Caco-2 (cell line): ENCODE measurements at regions of chr7 and their contacts with region 1.

Region 1: DNA sequence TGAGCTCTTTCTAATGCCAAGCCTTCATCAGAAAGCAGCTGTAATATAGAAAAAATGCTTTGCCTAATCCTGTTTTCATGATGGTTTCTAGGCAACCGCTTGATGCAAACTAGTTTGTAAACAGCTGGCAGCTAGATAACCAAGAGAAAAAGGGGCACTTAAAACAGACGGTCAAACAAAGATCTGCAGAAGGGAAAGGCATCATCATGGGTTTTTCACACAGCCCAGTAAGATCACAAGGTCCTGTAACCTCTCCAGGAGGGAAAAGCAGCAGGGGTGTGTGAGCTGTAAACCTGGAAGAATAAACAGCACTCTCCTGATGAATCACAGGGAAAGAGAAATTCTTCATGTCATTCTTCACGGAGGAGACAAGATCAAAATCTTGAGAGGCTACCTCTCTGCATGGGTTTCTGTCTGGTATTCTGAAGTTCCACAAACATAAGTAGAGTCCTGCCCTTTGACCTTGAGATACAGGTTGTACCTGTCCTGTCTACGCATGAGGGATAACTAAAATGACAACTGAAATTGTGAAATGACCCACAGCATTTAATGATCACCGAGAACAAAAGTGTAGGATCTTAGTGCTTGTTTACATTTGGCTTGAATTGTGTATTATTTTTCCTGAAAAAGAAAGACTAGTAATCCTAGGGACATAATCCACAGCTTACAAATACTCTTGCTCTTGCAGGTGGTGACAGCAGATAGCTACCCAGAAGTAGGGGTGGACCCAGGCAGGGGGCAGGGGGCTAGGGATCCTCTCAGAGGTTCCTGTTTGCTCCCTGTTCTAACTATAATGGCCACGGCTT is 48.0 kb downstream of the CREB3L2 start:
- DNase-seq: peak; percentile 79 to 91
- H3K4me3 ChIP-seq: no peak overlapping the region
- H3K4me3 Mint-ChIP-seq: peak overlapping the region; percentile 56
- H3K27ac Mint-ChIP-seq: peak overlapping the region; percentile 85
- H3K4me1 ChIP-seq: peaks cover 97% of the 10 kb centered on the region
- H3K4me1 Mint-ChIP-seq: peaks cover 72% of the 10 kb centered on the region
- H3K27me3 ChIP-seq: no peaks in the 10 kb centered on the region
- H3K27me3 Mint-ChIP-seq: no peaks in the 10 kb centered on the region
- CTCF ChIP-seq: no peak

Region 2: GRCh38 chr7:137717811-137718271 is 236.0 kb before region 1 on chr7:
- CTCF ChIA-PET with region 1: no interaction called
- POLR2A ChIA-PET with region 1: no interaction called
- intact Hi-C with region 1: no loop called
- DNase-seq: no peak
- H3K4me3 ChIP-seq: no peak overlapping the region
- H3K4me3 Mint-ChIP-seq: no peak overlapping the region
- H3K27ac Mint-ChIP-seq: no peak overlapping the region
- H3K4me1 ChIP-seq: no peaks in the 10 kb centered on the region
- H3K4me1 Mint-ChIP-seq: no peaks in the 10 kb centered on the region
- H3K27me3 ChIP-seq: no peaks in the 10 kb centered on the region
- H3K27me3 Mint-ChIP-seq: peaks cover 8% of the 10 kb centered on the region
- CTCF ChIP-seq: no peak

Region 3: DNA sequence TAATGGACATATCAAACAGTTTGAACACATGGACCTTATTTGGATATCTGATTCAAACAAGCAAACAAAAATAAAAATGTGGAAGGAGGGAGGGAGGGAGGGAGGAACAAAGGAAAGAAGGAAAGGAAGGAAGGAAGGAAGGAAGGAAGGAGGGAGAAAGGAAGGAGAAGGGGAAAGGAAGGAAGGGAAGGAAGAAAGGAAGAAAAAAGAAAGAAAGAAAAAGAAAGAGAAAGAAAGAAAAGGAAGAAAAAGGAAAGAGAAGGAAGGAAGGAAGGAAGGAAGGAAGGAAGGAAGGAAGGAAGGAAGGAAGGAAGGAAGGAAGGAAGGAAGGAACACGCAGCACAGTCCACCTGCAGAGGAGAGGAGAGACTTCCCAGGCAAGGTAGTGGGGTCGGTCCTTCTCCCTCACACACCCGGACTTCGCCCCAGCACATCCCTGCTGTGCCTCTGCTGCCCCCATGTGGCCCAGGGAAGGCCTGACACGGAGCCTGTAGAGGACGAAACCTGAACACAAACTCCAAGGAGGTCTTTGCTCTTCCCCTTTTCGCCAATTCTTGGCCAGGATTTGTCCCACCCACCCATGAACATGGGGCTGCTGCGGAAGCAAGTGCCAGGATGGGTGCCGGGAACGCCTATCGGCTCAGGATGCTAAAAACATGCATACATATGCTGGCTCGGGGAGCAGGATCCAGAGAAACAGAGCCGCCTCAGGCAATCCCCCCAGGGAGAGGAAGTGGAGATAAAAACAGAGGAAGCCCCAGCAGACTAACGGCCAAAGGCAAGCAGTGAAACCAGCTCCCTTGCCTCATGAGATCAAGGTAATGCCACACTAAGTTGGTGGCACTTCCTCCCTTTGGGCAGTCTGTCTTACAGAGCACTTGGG is 54.8 kb before region 1 on chr7:
- CTCF ChIA-PET with region 1: no interaction called
- POLR2A ChIA-PET with region 1: no interaction called
- intact Hi-C with region 1: loop called (anchors 1 kb)
- DNase-seq: peak; percentile 84 to 89
- H3K4me3 ChIP-seq: no peak overlapping the region
- H3K4me3 Mint-ChIP-seq: no peak overlapping the region
- H3K27ac Mint-ChIP-seq: peak overlapping the region; percentile 54
- H3K4me1 ChIP-seq: peaks cover 6% of the 10 kb centered on the region
- H3K4me1 Mint-ChIP-seq: peaks cover 20% of the 10 kb centered on the region
- H3K27me3 ChIP-seq: no peaks in the 10 kb centered on the region
- H3K27me3 Mint-ChIP-seq: no peaks in the 10 kb centered on the region
- CTCF ChIP-seq: peak; percentile 92 to 96

Region 4: GRCh38 chr7:137933270-137934017 is 20.4 kb before region 1 on chr7:
- CTCF ChIA-PET with region 1: no interaction called
- POLR2A ChIA-PET with region 1: no interaction called
- intact Hi-C with region 1: loop called (anchors 2 kb)
- DNase-seq: no peak
- H3K4me3 ChIP-seq: no peak overlapping the region
- H3K4me3 Mint-ChIP-seq: no peak overlapping the region
- H3K27ac Mint-ChIP-seq: no peak overlapping the region
- H3K4me1 ChIP-seq: peaks cover 56% of the 10 kb centered on the region
- H3K4me1 Mint-ChIP-seq: peaks cover 48% of the 10 kb centered on the region
- H3K27me3 ChIP-seq: no peaks in the 10 kb centered on the region
- H3K27me3 Mint-ChIP-seq: no peaks in the 10 kb centered on the region
- CTCF ChIP-seq: no peak

Region 5: DNA sequence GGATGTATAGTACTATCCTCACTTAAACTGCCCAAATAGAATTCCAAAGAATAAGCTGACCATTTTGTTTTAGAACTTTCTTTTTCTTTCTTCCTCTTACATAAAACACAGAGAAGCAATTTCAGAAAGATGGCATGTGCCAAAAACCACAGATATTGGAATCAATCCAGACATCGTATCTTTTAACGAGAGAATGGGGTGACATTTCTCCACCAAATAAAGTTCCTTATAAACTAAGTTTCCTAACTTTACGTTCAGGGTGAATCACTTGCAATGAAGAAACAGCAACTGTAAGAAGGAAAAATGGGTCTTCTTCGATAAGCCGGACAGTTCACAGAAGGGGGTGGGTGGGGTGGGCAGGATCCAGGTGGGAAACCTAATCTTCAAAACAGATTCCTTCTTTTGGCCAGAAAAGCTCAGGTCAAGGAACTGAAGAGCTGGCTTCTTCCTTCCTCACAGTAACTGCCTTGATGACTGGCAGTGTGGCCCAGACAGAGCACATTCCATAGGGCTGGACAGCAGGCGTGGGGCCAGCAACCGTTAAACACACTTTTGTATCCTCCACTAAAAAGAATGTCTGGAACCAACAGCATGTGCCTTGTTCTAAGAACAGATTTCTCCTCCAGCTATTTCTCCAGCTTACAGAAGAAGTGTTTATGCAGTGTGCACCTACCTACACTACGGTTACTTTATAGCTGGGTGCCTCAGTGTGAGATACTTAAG is 16.5 kb after region 1 on chr7:
- CTCF ChIA-PET with region 1: interaction called, 5 read pairs
- POLR2A ChIA-PET with region 1: interaction called, 9 read pairs
- intact Hi-C with region 1: loop called (anchors 1 kb)
- DNase-seq: no peak
- H3K4me3 ChIP-seq: no peak overlapping the region
- H3K4me3 Mint-ChIP-seq: no peak overlapping the region
- H3K27ac Mint-ChIP-seq: no peak overlapping the region
- H3K4me1 ChIP-seq: peaks cover 58% of the 10 kb centered on the region
- H3K4me1 Mint-ChIP-seq: peaks cover 42% of the 10 kb centered on the region
- H3K27me3 ChIP-seq: no peaks in the 10 kb centered on the region
- H3K27me3 Mint-ChIP-seq: no peaks in the 10 kb centered on the region
- CTCF ChIP-seq: no peak

Region 6: GRCh38 chr7:137992550-137993394 is 38.9 kb after region 1 on chr7:
- CTCF ChIA-PET with region 1: interaction called, 5 read pairs
- POLR2A ChIA-PET with region 1: interaction called, 11 read pairs
- intact Hi-C with region 1: loop called (anchors 1 kb)
- DNase-seq: peak; percentile 58 to 61
- H3K4me3 ChIP-seq: no peak overlapping the region; the same call in 1 of the 2 replicates
- H3K4me3 Mint-ChIP-seq: peak overlapping the region; percentile 54
- H3K27ac Mint-ChIP-seq: peak overlapping the region; percentile 95
- H3K4me1 ChIP-seq: peaks cover 61% of the 10 kb centered on the region
- H3K4me1 Mint-ChIP-seq: peaks cover 30% of the 10 kb centered on the region
- H3K27me3 ChIP-seq: no peaks in the 10 kb centered on the region
- H3K27me3 Mint-ChIP-seq: no peaks in the 10 kb centered on the region
- CTCF ChIP-seq: no peak

Region 7: GRCh38 chr7:138396251-138397070 is 442.6 kb after region 1 on chr7:
- CTCF ChIA-PET with region 1: no interaction called
- POLR2A ChIA-PET with region 1: no interaction called
- intact Hi-C with region 1: loop called (anchors 5 kb)
- DNase-seq: peak; percentile 93 to 95
- H3K4me3 ChIP-seq: no peak overlapping the region
- H3K4me3 Mint-ChIP-seq: peak overlapping the region; percentile 67
- H3K27ac Mint-ChIP-seq: peak overlapping the region; percentile 97
- H3K4me1 ChIP-seq: peaks cover 15% of the 10 kb centered on the region
- H3K4me1 Mint-ChIP-seq: peaks cover 17% of the 10 kb centered on the region
- H3K27me3 ChIP-seq: no peaks in the 10 kb centered on the region
- H3K27me3 Mint-ChIP-seq: no peaks in the 10 kb centered on the region
- CTCF ChIP-seq: no peak